Activated naive CD8-positive, alpha-beta T cell treated with anti-CD3 and anti-CD28 coated beads, Interleukin-2, amount 10 ng/mL, durations not matched to agents 7 days and 5 days (primary cell): ENCODE measurements at regions of chr3 and their contacts with region 1.

Region 1: DNA sequence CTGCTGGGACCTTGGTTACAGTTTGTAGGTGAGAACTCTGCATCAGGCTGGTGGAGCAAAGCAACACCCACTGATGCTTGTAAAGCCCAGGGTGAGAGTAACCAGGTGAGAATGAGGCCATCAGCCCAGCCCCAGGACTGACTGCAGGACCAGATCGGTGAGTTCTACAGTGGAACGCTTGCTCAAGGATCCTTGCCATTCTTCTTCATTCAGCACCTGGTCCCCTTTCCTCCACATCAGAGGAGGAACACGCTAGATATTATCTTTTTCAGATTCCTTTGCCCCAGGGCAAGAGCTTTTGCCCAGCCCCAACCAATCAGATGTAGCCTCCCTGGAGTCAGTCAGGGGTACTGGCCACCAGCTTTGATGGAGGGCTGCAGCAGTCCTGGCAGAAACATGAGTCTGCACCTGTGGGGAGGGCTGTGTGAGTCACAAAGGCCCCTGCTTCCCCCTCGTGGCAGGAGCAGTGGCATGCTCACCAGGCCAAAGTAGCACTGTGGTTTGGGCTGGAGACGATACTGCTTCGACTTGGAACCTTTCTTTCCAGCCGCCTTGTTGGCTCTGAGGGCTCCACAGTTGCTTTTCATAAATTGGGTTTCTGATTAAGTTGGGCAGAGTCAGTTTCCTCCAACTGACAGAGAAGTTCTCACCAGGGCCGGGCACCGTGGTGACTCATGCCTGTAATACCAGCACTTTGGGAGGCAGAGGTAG is 3.5 kb upstream of the SHISA5 start:
- DNase-seq: peak; percentile 73
- ATAC-seq: peak; percentile 81
- H3K4me3 Mint-ChIP-seq: peak overlapping the region; percentile 7
- H3K27ac Mint-ChIP-seq: peak overlapping the region; percentile 73
- H3K4me1 Mint-ChIP-seq: peaks cover 36% of the 10 kb centered on the region
- H3K27me3 Mint-ChIP-seq: peaks cover 4% of the 10 kb centered on the region

Region 2: GRCh38 chr3:48408823-48409281 is 98.7 kb before region 1 on chr3:
- POLR2A ChIA-PET with region 1: no interaction called
- DNase-seq: peak; percentile 22
- ATAC-seq: no peak
- H3K4me3 Mint-ChIP-seq: no peak overlapping the region
- H3K27ac Mint-ChIP-seq: no peak overlapping the region
- H3K4me1 Mint-ChIP-seq: no peaks in the 10 kb centered on the region
- H3K27me3 Mint-ChIP-seq: no peaks in the 10 kb centered on the region

Region 3: GRCh38 chr3:48439820-48440589 is 67.5 kb before region 1 on chr3 and contains the starts of genes CCDC51 and TMA7:
- POLR2A ChIA-PET with region 1: interaction called, 15 read pairs
- DNase-seq: peak; percentile 95
- ATAC-seq: peak; percentile 92
- H3K4me3 Mint-ChIP-seq: peak within 1 kb of the TSS; percentile 99
- H3K27ac Mint-ChIP-seq: peak within 1 kb of the TSS; percentile 97
- H3K4me1 Mint-ChIP-seq: peaks cover 33% of the 10 kb centered on the region
- H3K27me3 Mint-ChIP-seq: no peaks in the 10 kb centered on the region
- total RNA-seq, gene CCDC51: 11.5 to 12.2 TPM
- total RNA-seq, gene TMA7: 260 to 263 TPM

Region 4: DNA sequence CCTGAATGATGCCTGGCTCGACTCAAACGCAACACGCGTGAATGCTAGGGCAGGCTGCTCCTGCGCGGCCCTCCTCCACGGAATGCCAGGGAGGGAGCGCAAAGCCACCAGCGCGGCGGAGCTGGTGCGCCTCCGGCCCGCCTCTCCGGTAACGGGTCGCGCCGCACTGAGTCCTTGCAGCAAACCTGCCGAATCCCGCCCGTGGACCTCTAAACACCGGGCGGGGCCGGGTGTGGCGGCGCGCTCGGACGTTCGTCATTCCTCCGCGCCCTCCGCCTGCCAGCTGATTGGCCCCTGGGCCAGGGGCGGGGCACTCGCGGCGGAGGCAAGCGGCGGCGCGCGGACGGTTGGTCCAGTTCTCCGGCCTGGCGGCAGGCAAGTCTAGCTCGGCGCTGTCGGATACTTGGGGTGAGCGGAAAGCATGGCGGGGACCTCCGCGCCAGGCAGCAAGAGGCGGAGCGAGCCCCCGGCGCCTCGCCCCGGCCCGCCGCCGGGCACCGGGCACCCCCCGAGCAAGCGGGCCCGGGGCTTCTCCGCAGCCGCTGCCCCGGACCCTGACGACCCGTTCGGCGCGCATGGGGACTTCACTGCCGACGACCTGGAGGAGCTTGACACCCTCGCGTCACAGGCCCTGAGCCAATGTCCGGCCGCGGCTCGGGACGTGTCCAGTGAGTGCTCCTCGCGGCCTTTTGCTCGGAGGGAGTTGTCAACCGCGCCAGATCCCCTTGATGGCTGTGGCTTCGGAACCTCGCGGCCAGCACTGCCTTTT is 60.9 kb before region 1 on chr3 and contains the start of gene ATRIP:
- POLR2A ChIA-PET with region 1: interaction called, 11 read pairs
- DNase-seq: peak; percentile 95
- ATAC-seq: peak; percentile 97
- H3K4me3 Mint-ChIP-seq: peak within 1 kb of the TSS; percentile 95
- H3K27ac Mint-ChIP-seq: peak within 1 kb of the TSS; percentile 95
- H3K4me1 Mint-ChIP-seq: peaks cover 36% of the 10 kb centered on the region
- H3K27me3 Mint-ChIP-seq: no peaks in the 10 kb centered on the region
- total RNA-seq, gene ATRIP: 17.0 to 19.9 TPM

Region 5: DNA sequence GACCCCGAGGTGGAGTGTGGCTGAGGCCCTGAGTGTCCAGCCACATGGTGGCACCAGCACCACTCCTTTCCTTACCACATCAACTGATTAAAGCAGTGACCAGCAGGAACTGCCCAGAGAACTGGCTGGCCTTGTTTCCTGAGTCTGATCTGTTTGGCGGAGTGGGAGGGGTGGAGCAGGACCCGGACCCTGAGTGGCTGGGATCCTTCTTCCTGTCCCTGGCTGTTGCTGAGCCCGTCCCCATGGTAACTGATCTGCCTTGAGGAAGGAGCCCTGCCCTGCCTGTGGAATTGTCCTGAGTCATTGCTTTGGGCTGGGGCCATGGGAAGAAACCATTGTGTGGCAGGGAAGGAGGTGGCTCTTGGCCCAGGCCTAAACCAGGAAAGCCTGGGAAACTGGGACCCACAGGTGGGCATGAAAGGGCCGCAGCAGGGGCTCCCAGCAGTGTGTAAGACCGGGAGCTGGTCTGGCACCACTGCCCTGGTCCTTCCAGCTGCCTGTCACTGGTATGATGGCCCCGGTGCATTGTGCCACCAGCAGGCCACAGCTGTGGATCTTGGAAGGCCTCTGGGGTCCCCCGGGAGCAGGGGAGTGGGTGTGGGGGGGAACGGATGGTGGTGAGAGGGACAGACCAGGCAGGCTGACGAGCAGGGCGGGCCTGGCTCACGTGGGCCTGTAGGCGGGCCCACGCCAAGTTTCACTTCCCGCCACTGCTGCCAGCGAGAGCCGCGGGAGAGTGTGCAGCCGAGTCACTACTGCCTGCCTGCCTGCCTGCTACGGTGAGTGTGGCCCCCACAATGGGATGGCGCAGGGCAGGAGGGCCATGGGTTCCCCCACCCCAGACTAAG is 41.8 kb before region 1 on chr3:
- POLR2A ChIA-PET with region 1: interaction called, 28 read pairs
- DNase-seq: peak; percentile 87
- ATAC-seq: peak; percentile 93
- H3K4me3 Mint-ChIP-seq: peak overlapping the region; percentile 97
- H3K27ac Mint-ChIP-seq: peak overlapping the region; percentile 98
- H3K4me1 Mint-ChIP-seq: peaks cover 43% of the 10 kb centered on the region
- H3K27me3 Mint-ChIP-seq: no peaks in the 10 kb centered on the region

Region 6: DNA sequence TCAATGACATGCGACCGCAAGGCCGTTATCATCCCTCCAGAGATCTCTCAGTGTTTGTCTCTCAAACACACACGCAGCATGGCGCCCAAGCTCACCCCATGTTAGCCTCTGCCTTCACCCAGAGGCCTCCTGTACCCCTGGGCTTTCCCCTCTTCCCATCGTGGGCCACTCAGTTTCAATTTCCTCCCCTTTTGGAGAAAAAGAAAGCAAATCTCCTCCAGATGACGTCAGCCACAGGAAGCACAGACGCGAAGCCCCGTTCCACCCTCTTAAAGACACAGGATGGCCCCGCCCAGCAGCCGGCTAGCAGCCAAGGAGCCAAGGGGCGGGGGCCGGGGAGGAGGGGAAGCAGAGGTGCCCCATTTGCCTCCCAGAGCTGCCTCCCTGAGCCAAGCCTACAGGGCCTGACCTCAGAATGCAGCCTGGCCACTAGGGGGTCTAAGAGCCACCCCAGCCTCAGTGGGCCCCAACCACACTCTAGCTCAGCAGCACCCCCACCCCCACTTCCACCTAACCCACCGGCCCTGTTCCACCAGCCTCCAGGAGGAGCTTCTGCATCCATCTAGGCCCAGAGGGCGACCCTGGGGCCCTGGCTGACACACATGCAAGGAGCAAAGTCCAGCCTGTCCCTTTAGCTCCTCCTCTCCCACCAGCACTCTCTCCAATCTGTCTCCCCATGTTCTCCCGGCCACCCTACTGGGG is 34.4 kb before region 1 on chr3:
- POLR2A ChIA-PET with region 1: interaction called, 41 read pairs
- DNase-seq: peak; percentile 93
- ATAC-seq: peak; percentile 87
- H3K4me3 Mint-ChIP-seq: peak overlapping the region; percentile 88
- H3K27ac Mint-ChIP-seq: peak overlapping the region; percentile 99
- H3K4me1 Mint-ChIP-seq: peaks cover 42% of the 10 kb centered on the region
- H3K27me3 Mint-ChIP-seq: no peaks in the 10 kb centered on the region

Region 7: DNA sequence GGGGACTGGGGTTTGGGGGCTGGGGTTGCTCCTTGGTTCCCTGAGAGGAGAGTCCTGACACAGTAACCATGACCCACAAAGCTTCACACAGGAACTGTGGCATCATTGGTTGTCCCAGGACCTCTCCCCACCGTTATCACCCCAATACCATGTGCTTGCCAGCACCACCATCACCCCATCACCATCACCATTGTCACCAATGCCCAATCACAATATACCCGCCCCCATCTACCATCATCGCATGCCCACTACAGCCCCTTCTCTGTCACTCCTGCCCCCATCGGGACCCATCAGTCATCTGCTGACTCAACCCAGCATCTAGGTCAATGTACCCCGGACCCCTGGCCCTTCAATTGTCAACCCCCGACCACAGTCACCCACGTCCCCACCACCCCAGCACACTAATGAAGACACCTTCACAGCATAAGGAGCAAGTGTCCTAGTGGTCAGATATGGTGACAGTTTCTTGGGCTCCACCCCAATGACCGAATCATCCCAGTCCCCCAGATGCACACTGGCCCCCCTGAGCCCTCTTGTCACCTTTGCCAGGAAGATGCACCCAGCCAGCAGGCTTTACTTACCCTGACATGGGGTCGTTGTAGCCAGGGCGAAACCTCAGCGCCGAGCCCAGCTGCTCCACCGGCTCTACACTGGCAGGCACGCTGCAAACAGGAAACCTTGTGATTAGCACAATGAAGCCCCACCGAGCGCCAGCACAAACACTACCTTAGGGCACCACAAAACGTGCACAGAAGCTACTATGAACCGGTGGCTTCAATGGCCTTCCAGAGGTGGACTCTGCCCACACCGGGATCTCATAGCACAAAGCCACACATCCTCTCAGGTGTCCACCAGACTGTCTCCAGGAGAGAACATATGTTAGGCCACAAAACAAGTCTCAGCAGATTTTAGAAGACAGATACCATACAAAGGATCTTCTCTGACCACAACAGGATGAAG is 28.6 kb before region 1 on chr3:
- POLR2A ChIA-PET with region 1: interaction called, 41 read pairs
- DNase-seq: peak; percentile 75
- ATAC-seq: peak; percentile 91
- H3K4me3 Mint-ChIP-seq: peak overlapping the region; percentile 85
- H3K27ac Mint-ChIP-seq: peak overlapping the region; percentile 98
- H3K4me1 Mint-ChIP-seq: peaks cover 26% of the 10 kb centered on the region
- H3K27me3 Mint-ChIP-seq: no peaks in the 10 kb centered on the region